Activated CD4-positive, alpha-beta memory T cell treated with anti-CD3 and anti-CD28 coated beads, Interleukin-2, amount 10 ng/mL, durations not matched to agents 7 days and 5 days (primary cell): ENCODE measurements at regions of chr12 and their contacts with region 1.

Region 1: DNA sequence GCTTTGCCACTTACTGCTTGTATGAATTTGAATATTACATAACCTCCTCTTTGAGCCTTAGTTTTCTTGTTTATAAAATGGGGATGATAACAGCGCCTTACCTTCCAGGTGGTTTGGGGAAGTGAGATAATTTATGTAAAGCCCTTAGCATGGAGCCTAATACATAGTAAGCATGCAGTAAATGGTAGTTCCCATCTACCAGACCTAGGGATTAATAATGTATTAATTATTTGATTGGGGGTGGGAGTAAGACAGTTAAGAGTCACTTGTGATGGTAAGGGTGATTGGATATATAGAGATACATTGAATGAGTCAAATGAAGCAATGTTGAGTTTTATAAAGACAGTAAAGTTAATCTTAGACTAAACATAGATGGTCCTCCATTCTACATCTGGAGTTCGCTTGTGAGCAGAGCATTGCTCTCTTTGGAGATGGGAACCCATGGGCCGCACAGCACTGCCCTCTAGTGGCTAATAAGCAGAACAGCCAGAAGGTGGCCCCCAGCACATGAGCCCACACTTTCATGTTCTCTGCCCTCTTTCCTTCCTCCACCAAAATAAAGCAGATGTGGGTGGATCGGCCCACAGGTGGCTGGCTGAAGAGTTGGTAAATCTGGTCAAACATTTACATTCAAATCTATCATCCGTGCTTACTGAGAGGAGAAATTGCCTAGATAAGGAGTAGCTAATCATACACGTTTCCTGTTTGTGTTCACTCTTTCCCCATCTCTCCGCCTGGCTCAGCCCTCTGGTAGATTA is 26.5 kb upstream of the TAMALIN start:
- DNase-seq: peak; percentile 75
- H3K4me3 Mint-ChIP-seq: no peak overlapping the region
- H3K27ac Mint-ChIP-seq: peak overlapping the region; percentile 51
- H3K4me1 Mint-ChIP-seq: peaks cover 29% of the 10 kb centered on the region
- H3K27me3 Mint-ChIP-seq: peaks cover 3% of the 10 kb centered on the region

Region 2: GRCh38 chr12:51496895-51497294 is 483.3 kb before region 1 on chr12:
- CTCF ChIA-PET with region 1: no interaction called
- POLR2A ChIA-PET with region 1: no interaction called
- DNase-seq: no peak
- H3K4me3 Mint-ChIP-seq: no peak overlapping the region
- H3K27ac Mint-ChIP-seq: no peak overlapping the region
- H3K4me1 Mint-ChIP-seq: no peaks in the 10 kb centered on the region
- H3K27me3 Mint-ChIP-seq: peaks cover 7% of the 10 kb centered on the region

Region 3: DNA sequence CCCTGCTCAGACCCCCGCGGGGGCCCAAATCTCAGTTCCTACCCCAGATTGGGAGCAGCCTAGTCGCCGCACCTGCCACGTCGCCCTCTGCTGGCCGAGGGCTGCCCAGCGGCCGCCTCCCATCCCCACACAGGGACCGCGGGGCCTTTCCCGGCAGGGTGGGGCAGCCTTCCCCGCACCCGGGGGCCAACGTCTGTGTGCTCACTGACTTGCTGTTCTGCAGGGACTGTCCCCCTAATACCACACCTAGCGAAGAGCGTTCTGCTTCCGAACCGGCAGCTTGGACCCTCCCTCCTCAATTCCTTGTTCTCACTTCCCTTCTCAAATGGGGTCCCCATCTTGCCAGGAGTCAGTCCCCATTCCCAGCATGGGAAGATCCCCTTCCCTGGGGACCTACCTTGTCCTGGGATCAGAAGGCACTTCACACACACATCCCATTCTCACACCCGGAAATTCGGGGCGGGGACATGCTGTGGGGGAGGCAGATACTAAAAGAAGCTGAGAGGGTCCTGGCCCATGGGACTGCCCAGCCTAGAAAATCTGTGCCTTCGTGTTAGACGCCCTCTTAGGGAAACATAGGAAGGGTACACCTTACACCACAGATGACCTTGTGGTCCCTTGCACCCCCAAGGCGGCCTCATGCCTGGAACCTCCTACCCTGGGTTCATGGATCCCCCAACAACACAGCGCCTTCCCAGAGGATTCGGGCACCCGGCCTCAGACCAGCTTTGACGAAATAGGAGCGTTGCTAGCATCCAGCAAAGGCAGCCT is 56.5 kb before region 1 on chr12:
- CTCF ChIA-PET with region 1: interaction called, 19 read pairs
- POLR2A ChIA-PET with region 1: no interaction called
- DNase-seq: peak; percentile 55
- H3K4me3 Mint-ChIP-seq: peak overlapping the region; percentile 27
- H3K27ac Mint-ChIP-seq: no peak overlapping the region
- H3K4me1 Mint-ChIP-seq: peaks cover 5% of the 10 kb centered on the region
- H3K27me3 Mint-ChIP-seq: peaks cover 8% of the 10 kb centered on the region

Region 4: GRCh38 chr12:51994959-51995358 is 14.7 kb after region 1 on chr12:
- CTCF ChIA-PET with region 1: interaction called, 14 read pairs
- POLR2A ChIA-PET with region 1: no interaction called
- DNase-seq: no peak
- H3K4me3 Mint-ChIP-seq: no peak overlapping the region
- H3K27ac Mint-ChIP-seq: no peak overlapping the region
- H3K4me1 Mint-ChIP-seq: peaks cover 4% of the 10 kb centered on the region
- H3K27me3 Mint-ChIP-seq: no peaks in the 10 kb centered on the region